ENCODE measurements at regions of chr6 and their contacts with region 1.

Region 1: GRCh38 chr6:21554286-21554685 is 39.3 kb upstream of the SOX4 start:
- DNase-seq: no peak
- H3K4me3 ChIP-seq: no peak overlapping the region
- H3K27ac ChIP-seq: no peak overlapping the region
- H3K4me1 ChIP-seq: no peaks in the 10 kb centered on the region
- H3K27me3 ChIP-seq: no peaks in the 10 kb centered on the region
- CTCF ChIP-seq: no peak
- POLR2A ChIP-seq: no peak

Region 2: DNA sequence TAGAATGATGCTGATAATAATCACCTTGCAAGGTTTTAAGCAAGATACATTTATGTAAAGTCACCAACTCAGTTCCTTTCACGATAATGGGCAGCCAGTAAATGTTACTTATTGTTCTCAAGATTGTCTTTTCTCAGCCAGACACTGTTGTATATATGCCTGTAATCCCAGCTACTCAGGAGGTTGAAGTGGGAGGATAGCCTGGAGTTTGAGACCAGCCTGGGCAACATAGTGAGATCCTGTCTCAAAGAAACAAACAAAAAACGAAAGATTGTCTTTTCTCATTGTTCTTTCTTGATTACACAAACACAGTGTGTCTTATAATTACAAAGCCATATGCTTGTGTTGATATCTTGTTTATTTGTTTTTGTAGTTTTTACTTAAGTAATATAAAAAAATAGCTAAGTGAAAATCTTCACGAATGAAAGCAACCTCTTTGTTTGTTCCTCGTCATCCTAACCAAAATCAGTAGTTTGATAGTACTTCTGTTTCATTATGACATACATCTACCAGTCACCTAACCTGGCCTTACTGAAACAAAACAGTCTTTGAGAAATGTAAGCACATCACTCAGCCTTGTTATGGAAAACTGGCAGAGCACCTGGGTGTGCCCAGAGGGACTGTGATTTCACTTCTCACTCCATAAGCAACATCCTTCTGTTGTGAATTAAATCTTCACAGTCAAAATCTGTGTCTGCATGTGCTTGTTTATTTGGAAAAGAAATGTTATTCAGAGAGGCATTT is 396.9 kb before region 1 on chr6:
- CTCF ChIA-PET with region 1: no interaction called
- POLR2A ChIA-PET with region 1: no interaction called
- dilution Hi-C with region 1: no loop called
- intact Hi-C with region 1: no loop called
- DNase-seq: no peak
- H3K4me3 ChIP-seq: no peak overlapping the region
- H3K27ac ChIP-seq: no peak overlapping the region
- H3K4me1 ChIP-seq: no peaks in the 10 kb centered on the region
- H3K27me3 ChIP-seq: no peaks in the 10 kb centered on the region
- CTCF ChIP-seq: no peak
- POLR2A ChIP-seq: no peak

Region 3: DNA sequence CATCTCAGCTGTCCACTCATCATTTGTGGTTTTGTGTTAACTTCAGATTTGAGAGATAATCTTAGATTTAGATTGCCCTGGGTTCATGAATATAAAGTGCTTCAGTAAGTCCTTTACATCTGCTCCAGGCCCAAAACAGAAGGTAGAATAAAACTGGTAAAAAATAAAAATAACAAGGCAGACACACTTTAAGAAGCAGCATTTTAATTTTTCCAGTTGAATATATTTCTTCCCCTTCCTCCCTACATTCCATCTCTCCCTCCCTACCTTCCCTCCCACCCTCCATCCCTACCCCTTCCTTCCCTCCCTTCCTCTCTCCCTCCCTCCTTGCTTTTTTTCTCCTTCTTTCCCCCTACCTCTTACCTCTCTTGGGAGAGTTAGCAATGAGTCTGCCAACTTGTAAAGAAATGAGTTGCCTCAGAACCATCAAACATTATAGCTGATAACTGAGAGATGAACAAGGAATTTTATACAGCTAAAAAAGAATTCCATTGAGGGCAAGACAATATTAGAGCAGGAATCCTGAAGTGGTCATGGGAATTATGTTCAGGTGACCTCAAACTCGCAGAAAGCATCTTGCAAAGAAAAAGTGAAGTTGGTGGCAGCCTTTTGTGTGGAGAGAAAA is 105.7 kb before region 1 on chr6:
- CTCF ChIA-PET with region 1: no interaction called
- POLR2A ChIA-PET with region 1: interaction called, 12 read pairs
- dilution Hi-C with region 1: no loop called
- intact Hi-C with region 1: no loop called
- DNase-seq: no peak
- H3K4me3 ChIP-seq: no peak overlapping the region
- H3K27ac ChIP-seq: no peak overlapping the region
- H3K4me1 ChIP-seq: no peaks in the 10 kb centered on the region
- H3K27me3 ChIP-seq: no peaks in the 10 kb centered on the region
- CTCF ChIP-seq: no peak
- POLR2A ChIP-seq: no peak